ENCODE measurements at regions of chr6 and their contacts with region 1.

Region 1: GRCh38 chr6:8063761-8064637 is at the start of gene BLOC1S5:
- DNase-seq: peak; percentile 95
- H3K4me3 Mint-ChIP-seq: peak within 1 kb of the TSS; percentile 96
- H3K27ac Mint-ChIP-seq: peak within 1 kb of the TSS; percentile 95
- H3K4me1 Mint-ChIP-seq: peaks cover 35% of the 10 kb centered on the region
- H3K27me3 Mint-ChIP-seq: no peaks in the 10 kb centered on the region
- total RNA-seq, gene BLOC1S5: 19.6 and 19.7 TPM in 2 replicates

Region 2: DNA sequence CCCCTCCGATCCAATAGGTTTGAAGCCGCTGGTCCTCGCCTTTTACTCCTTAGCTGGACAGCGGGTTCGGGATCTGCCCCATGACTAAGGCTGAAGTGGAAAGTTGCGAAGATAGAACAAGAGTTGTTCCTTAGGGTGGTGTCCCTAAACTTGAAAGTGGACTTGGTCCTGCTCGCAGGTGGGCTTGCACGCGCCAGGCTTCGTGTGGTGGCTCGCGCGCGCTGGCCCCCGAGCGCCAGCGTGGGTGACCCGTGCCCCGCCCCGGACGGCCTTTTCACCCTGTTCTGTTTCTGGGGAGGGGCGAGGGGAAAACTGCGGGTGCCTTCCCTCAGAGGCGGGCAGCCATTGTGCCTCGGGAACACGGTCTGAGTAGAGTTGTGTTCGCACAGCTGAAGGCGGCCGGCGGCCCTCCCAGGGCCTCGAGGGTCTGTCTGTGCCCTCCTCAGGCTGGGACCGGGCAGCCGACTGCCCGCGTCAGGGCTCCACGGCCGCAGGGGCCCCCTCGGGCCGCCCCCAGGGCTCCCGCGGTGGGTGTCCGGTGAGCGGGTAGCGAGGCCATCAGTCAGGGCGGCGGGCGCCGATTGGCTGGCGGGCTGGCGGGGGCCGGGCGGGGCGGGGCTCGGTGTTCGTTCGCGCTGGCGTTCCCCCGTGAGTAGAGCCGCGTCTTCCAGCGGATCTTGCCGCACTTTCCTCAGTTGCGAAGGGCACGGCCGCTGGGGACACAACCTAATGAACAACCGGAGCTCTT is 923.2 kb before region 1 on chr6:
- intact Hi-C with region 1: loop called (anchors 2 kb)
- DNase-seq: peak; percentile 78
- H3K4me3 Mint-ChIP-seq: peak overlapping the region; percentile 84
- H3K27ac Mint-ChIP-seq: peak overlapping the region; percentile 84
- H3K4me1 Mint-ChIP-seq: peaks cover 68% of the 10 kb centered on the region
- H3K27me3 Mint-ChIP-seq: no peaks in the 10 kb centered on the region

Region 3: DNA sequence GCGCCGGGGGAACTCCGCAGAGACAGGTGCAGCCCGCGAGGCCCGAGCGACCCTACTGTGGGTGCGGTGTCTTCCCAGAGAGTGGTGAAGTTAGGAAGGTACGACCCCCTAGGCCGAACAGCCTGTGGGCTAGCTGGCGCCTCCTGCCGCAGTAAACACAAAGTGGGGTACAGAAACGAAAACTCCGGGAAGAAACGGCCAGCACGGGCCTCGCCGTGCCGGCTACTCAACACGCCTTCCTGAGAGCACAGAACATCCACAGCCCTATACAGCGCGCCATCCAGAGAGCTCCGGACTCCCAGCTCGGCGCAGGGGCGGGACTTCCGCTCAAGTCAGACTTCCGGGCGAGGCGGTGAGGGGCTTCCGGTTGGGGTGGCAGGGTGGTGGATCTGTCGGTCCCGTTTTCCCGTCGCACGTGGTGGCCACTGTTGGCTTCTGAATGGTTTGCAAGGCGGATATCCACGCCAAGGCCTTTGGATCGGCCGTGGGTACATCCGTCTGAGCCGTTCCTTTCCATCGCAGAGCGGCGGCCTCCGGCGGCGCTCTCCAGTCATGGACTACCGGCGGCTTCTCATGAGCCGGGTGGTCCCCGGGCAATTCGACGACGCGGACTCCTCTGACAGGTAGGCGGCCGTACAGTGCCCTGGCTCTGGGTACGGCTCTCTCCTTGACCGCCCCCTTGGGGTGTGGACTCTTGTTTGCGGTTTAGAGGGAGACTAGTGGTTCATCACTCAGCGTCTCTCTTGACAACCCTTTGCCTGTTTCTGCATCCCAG is 674.4 kb before region 1 on chr6 and contains the starts of genes CAGE1 and RIOK1:
- intact Hi-C with region 1: loop called (anchors 1 kb)
- DNase-seq: peak; percentile 93
- H3K4me3 Mint-ChIP-seq: peak within 1 kb of the TSS; percentile 92
- H3K27ac Mint-ChIP-seq: peak within 1 kb of the TSS; percentile 100
- H3K4me1 Mint-ChIP-seq: peaks cover 53% of the 10 kb centered on the region
- H3K27me3 Mint-ChIP-seq: no peaks in the 10 kb centered on the region
- total RNA-seq, gene CAGE1: 0.13 and 0.20 TPM in 2 replicates
- total RNA-seq, gene RIOK1: 61.4 and 67.2 TPM in 2 replicates

Region 4: DNA sequence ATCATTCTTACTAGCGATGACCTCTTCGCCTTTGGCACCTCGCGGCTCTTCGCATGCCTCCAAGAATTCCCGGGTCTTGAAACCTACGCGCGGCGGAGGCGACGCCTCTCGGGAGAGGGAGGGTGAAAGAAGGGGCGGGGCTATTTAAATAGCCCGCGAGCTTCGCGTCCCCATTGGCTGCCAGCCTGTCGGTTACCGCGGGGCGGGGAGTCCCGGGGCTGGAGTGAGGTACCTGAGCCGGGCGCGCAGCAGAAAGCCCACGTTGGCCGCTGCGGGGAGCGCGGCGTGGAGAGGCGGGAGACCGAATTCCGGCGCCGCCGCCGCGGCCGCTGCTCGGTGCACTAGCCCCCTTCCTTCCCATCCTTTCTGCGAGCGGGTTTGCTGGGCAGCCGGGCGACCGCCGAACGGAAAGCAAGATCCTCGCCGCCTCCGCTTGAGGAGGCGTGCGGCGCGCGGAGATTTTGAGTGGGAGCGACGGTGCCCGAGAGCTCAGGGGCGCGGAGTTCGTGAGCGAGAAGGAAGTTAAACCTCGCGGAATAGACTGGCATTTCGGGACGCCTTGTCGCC is 338.1 kb before region 1 on chr6 and contains the start of gene BMP6:
- intact Hi-C with region 1: loop called (anchors 1 kb)
- DNase-seq: peak; percentile 71
- H3K4me3 Mint-ChIP-seq: peak within 1 kb of the TSS; percentile 80
- H3K27ac Mint-ChIP-seq: no peak within 1 kb of the TSS
- H3K4me1 Mint-ChIP-seq: peaks cover 17% of the 10 kb centered on the region
- H3K27me3 Mint-ChIP-seq: peaks cover 68% of the 10 kb centered on the region
- total RNA-seq, gene BMP6: 0.86 and 1.1 TPM in 2 replicates

Region 5: DNA sequence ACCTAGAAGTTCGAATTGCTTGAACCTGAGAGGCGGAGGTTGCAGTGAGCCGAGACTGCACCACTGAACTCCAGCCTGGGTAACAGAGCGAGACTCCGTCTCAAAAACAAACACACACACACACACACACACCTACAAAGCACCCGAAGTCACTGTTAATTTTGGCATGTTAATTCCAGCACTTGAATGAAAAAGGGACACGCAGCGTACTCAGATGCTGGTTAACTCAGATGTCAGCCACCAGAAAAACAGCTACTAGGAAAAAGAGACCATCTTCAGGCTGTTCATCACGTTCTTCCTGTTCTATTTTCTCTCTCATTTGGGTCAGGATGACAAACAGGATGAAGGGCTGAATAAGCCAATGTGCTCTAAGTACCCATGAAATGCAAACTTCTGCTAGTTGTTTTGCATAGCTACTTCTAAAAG is 46.7 kb before region 1 on chr6:
- intact Hi-C with region 1: loop called (anchors 2 kb)
- DNase-seq: no peak
- H3K4me3 Mint-ChIP-seq: peak overlapping the region; percentile 86
- H3K27ac Mint-ChIP-seq: peak overlapping the region; percentile 97
- H3K4me1 Mint-ChIP-seq: peaks cover 22% of the 10 kb centered on the region
- H3K27me3 Mint-ChIP-seq: no peaks in the 10 kb centered on the region

Region 6: GRCh38 chr6:8102122-8102958 is 38.3 kb after region 1 on chr6 and contains the start of gene EEF1E1:
- intact Hi-C with region 1: loop called (anchors 1 kb)
- DNase-seq: peak; percentile 87
- H3K4me3 Mint-ChIP-seq: peak within 1 kb of the TSS; percentile 92
- H3K27ac Mint-ChIP-seq: peak within 1 kb of the TSS; percentile 97
- H3K4me1 Mint-ChIP-seq: peaks cover 34% of the 10 kb centered on the region
- H3K27me3 Mint-ChIP-seq: peaks cover 4% of the 10 kb centered on the region
- total RNA-seq, gene EEF1E1: 92.8 and 99.8 TPM in 2 replicates

Region 7: DNA sequence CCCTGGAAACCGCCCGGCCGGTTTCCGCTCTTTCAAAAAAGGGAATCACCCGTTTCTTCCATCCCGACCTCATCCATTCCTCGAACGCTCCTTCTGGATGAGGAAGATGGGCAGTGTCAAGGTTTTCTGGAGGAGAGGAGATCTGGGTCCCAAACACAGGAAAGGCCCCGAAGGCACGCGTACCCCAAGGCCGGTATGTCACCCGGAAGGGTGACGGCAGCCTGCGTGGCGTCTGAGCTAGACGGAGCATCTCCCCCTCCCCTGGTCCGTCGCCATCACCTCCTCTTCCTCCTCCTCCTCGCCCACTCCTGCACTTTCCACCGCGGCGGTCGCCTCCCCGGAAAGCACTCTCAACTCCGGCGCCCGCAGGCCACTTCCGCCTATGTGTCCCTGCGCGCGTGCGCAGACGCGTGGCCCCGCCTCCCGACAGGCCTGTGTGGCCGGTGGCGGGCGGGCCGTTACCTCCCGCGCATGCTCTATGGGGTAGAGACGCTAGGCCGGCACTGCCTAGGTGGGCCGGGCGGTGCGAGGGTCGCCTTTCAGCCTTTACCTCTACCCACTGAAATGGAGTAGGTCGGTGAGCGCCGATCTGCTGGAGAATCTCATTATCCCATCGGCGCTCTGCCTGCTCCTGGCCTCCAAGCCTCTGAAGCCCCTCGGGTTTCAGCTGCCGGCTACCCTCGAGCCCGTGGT is 371.3 kb after region 1 on chr6 and contains the start of gene SLC35B3:
- intact Hi-C with region 1: loop called (anchors 1 kb)
- DNase-seq: peak; percentile 98
- H3K4me3 Mint-ChIP-seq: peak within 1 kb of the TSS; percentile 94
- H3K27ac Mint-ChIP-seq: peak within 1 kb of the TSS; percentile 98
- H3K4me1 Mint-ChIP-seq: peaks cover 39% of the 10 kb centered on the region
- H3K27me3 Mint-ChIP-seq: peaks cover 3% of the 10 kb centered on the region
- total RNA-seq, gene SLC35B3: 6.4 and 6.5 TPM in 2 replicates